ENCODE measurements at regions of chr5 and their contacts with region 1.

Region 1: GRCh38 chr5:137778772-137779564 is 24.8 kb upstream of the HNRNPA0 start:
- DNase-seq: peak in 1 of 2 experiments; percentile 64
- ATAC-seq: peak in 1 of 2 experiments; percentile 69; a peak in 3 of 6 replicates
- H3K4me3 ChIP-seq: no peak overlapping the region
- H3K27ac ChIP-seq: no peak overlapping the region
- H3K4me1 ChIP-seq: no peaks in the 10 kb centered on the region; the same call in 2 of the 3 replicates
- CTCF ChIP-seq: peak; percentile 94
- EP300 ChIP-seq: no peak
- POLR2A ChIP-seq: no peak
- RAD21 ChIP-seq: peak; percentile 88 to 92

Region 2: GRCh38 chr5:137036640-137037039 is 742.3 kb before region 1 on chr5:
- CTCF ChIA-PET with region 1: no interaction called
- POLR2A ChIA-PET with region 1: no interaction called
- DNase-seq: no peak
- ATAC-seq: no peak
- H3K4me3 ChIP-seq: no peak overlapping the region
- H3K27ac ChIP-seq: no peak overlapping the region
- H3K4me1 ChIP-seq: no peaks in the 10 kb centered on the region
- CTCF ChIP-seq: no peak
- EP300 ChIP-seq: no peak
- POLR2A ChIP-seq: no peak
- RAD21 ChIP-seq: no peak

Region 3: DNA sequence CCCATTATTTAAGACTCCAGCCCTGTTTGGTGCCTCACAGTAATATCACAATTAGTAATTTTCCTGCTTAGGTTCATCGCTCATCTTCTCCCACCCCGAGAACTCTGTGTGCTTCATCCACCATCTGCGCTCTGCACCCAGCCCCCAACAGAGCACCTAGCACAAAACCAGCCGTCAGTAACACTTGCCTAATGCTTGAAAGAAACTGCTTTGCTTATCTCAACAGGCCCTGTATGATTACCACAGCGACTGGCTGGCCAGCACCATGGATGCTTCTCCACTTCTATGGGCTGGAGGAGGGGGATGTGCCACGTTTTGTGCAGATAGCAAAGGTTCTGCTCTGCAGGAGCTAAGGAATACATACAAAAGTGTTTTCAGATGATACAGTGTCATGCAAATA is 446.7 kb before region 1 on chr5:
- CTCF ChIA-PET with region 1: no interaction called
- POLR2A ChIA-PET with region 1: no interaction called
- DNase-seq: no peak
- ATAC-seq: no peak
- H3K4me3 ChIP-seq: no peak overlapping the region
- H3K27ac ChIP-seq: no peak overlapping the region
- H3K4me1 ChIP-seq: no peaks in the 10 kb centered on the region
- CTCF ChIP-seq: no peak
- EP300 ChIP-seq: no peak
- POLR2A ChIP-seq: no peak
- RAD21 ChIP-seq: no peak

Region 4: GRCh38 chr5:137718611-137719010 is 60.4 kb before region 1 on chr5:
- CTCF ChIA-PET with region 1: no interaction called
- POLR2A ChIA-PET with region 1: no interaction called
- DNase-seq: no peak
- ATAC-seq: no peak
- H3K4me3 ChIP-seq: no peak overlapping the region
- H3K27ac ChIP-seq: no peak overlapping the region
- H3K4me1 ChIP-seq: no peaks in the 10 kb centered on the region
- CTCF ChIP-seq: no peak
- EP300 ChIP-seq: no peak
- POLR2A ChIP-seq: no peak
- RAD21 ChIP-seq: no peak

Region 5: DNA sequence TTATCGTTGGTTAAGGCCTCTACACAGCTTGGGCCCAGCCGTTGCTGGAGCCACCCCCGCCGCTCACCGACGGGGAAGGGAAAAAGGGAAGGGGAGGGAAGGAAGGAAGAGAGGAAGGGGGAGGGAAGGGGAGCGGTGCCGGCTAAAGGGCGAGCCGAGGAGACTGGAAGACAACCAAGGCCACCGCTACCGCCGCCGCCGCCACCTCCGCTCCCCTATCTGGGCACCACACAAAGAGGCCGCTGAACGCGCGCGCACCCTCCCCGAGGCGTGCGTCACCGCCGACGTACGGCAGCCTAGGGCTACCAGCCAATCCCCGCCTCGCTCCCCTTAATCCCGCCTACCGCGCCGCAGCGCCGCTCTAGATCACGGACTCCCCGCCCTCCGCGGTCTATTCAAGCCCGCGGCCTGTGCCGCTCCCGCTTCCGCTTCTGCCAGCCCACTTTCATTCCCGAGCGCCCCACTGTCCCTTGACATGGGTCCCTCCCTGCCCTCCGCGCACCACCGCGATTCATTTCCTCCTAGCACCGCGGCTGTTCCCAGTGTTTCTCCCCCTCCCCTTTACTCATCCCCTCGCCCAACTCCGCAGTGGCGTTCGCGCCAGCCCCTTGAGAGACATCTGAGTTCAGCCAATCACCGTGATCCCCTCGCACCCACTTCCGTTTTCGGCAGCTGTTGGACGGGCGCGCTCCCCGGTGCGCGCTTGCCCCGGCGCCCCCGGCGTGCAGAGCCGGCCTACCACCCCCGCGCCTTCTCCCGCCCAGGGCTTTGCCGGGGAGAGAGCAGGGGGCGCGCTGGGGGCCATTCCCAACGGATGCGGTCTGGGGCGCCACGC is 24.6 kb before region 1 on chr5 and contains the start of gene HNRNPA0:
- CTCF ChIA-PET with region 1: interaction called, 58 read pairs
- POLR2A ChIA-PET with region 1: interaction called, 4 read pairs
- DNase-seq: peak; percentile 97 to 98
- ATAC-seq: peak; percentile 93 to 94
- H3K4me3 ChIP-seq: peak within 1 kb of the TSS; percentile 78
- H3K27ac ChIP-seq: peak within 1 kb of the TSS; percentile 92 to 97
- H3K4me1 ChIP-seq: peaks cover 37% of the 10 kb centered on the region
- CTCF ChIP-seq: no peak
- EP300 ChIP-seq: no peak
- POLR2A ChIP-seq: peak; percentile 92
- RAD21 ChIP-seq: no peak
- polyA plus RNA-seq, gene HNRNPA0: 13.6 and 17.0 TPM in 2 replicates

Region 6: GRCh38 chr5:137808503-137809205 is 29.7 kb after region 1 on chr5:
- CTCF ChIA-PET with region 1: interaction called, 32 read pairs
- POLR2A ChIA-PET with region 1: no interaction called
- DNase-seq: no peak
- ATAC-seq: peak in 1 of 2 experiments; percentile 39; a peak in 2 of 6 replicates
- H3K4me3 ChIP-seq: no peak overlapping the region
- H3K27ac ChIP-seq: no peak overlapping the region
- H3K4me1 ChIP-seq: peaks cover 4% of the 10 kb centered on the region; the same call in 1 of the 3 replicates
- CTCF ChIP-seq: no peak
- EP300 ChIP-seq: no peak
- POLR2A ChIP-seq: no peak
- RAD21 ChIP-seq: no peak

Region 7: DNA sequence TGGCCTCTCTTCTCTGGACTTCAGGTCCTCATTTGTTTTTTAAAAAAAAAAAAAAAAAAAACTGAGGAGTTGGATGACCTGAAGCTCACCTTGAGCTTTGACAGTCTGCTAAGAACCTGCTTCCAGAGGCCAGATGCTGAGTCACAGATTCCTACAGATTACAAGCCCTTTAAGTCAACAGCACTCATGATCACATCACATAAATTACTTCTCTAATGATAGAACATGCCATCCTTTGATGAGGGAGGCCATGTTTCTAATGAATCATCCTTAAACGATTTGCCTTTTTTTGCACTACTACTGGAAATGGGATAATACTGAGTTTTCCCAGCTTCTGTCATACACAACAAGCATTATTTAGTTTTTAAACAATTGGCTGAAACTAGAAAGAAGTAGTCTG is 54.5 kb after region 1 on chr5:
- CTCF ChIA-PET with region 1: interaction called, 129 read pairs
- POLR2A ChIA-PET with region 1: interaction called, 4 read pairs
- DNase-seq: peak; percentile 63 to 95
- ATAC-seq: peak; percentile 94 to 95
- H3K4me3 ChIP-seq: no peak overlapping the region
- H3K27ac ChIP-seq: peak overlapping the region; percentile 63 to 70
- H3K4me1 ChIP-seq: peaks cover 63% of the 10 kb centered on the region
- CTCF ChIP-seq: no peak
- EP300 ChIP-seq: peak; percentile 59 to 75; a peak in 3 of 5 replicates
- POLR2A ChIP-seq: no peak
- RAD21 ChIP-seq: 0 out of 5 replicates have a peak, but pooled peaks of 1 of the 2 experiments have one; percentile 12

Region 8: GRCh38 chr5:138035605-138036537 is 256.9 kb after region 1 on chr5:
- CTCF ChIA-PET with region 1: interaction called, 17 read pairs
- POLR2A ChIA-PET with region 1: no interaction called
- DNase-seq: peak; percentile 69 to 93
- ATAC-seq: peak; percentile 71 to 79
- H3K4me3 ChIP-seq: no peak overlapping the region
- H3K27ac ChIP-seq: peak overlapping the region; percentile 44 to 65; a peak in 5 of 6 replicates
- H3K4me1 ChIP-seq: peaks cover 17% of the 10 kb centered on the region
- CTCF ChIP-seq: peak; percentile 99
- EP300 ChIP-seq: no peak
- POLR2A ChIP-seq: no peak
- RAD21 ChIP-seq: peak; percentile 84

Measured in A549 (cell line).